A549 (cell line): ENCODE measurements at regions of chr2 and their contacts with region 1.

Region 1: DNA sequence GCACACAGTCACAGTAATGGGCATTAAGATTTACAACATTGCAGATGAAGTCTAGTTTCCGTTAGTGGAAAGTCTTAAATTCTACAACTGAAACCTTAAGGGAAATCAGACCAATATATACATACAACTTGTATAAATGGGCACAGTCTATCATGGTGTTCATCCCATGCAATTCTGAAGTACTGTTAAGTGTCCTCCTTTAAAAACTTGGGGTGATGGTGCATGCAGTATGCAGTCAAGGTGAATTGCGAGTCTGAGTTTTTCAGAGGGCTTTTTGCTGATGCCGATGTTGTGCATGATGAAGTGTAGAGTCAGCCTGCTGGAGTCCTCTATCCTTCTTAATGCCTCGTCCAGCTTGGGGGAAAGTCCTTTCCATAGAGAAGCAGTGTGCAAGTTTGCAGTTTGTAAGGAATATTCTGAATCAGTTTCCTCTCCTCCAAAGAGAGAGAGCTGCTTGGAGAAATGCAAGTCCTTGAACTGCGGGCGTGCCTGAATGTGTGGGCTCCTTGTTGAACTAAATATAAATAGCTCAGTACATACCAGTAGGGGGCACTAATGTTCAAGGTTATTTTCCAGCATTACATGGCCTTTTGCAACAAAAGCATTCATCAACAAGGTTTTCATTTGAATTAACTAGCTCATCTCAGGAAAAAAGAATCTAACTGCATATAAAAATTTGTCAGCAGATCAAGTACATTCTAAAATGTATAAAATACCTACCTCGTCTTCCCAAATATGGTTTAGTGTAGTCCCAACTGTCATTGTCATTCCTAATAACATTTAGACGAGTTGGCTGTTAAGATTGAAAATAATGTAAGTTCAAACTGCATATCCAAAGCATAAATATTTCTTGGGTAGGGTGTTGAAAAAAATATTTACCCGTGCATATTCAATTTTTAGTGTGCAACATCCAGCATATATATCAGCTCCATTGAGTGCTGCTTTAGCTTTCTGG is 21.3 kb downstream of the HNRNPLL start:
- DNase-seq: peak in 1 of 2 experiments; percentile 83
- ATAC-seq: peak; percentile 91 to 97
- H3K4me3 ChIP-seq: no peak overlapping the region
- H3K27ac ChIP-seq: no peak overlapping the region
- H3K4me1 ChIP-seq: peaks cover 3% of the 10 kb centered on the region; the same call in 1 of the 3 replicates
- CTCF ChIP-seq: peak; percentile 94
- EP300 ChIP-seq: no peak
- POLR2A ChIP-seq: no peak
- RAD21 ChIP-seq: peak; percentile 89 to 91

Region 2: GRCh38 chr2:38546585-38546984 is 34.9 kb before region 1 on chr2:
- CTCF ChIA-PET with region 1: interaction called, 11 read pairs
- POLR2A ChIA-PET with region 1: no interaction called
- DNase-seq: no peak
- ATAC-seq: no peak
- H3K4me3 ChIP-seq: no peak overlapping the region
- H3K27ac ChIP-seq: no peak overlapping the region
- H3K4me1 ChIP-seq: peaks cover 21% of the 10 kb centered on the region
- CTCF ChIP-seq: no peak
- EP300 ChIP-seq: no peak
- POLR2A ChIP-seq: no peak
- RAD21 ChIP-seq: no peak

Region 3: DNA sequence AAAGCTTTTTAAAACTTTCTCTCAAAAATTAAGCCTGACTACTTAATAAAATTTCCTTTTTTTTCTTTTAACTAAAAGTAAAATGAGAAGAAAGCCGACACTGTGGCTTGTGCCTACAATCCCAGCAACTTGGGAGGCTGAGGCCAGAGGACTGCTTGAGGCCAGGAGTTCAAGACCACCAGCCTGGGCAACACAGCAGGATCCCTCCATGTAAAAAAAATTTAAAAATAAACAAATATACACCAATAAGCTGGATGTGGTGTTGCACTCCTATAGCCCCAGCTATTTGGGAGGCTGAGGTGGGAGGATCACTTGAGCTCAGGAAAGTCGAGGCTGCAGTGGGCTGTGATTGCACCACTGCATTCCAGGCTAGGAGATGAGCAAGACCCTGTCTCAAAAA is 16.1 kb before region 1 on chr2:
- CTCF ChIA-PET with region 1: interaction called, 45 read pairs
- POLR2A ChIA-PET with region 1: no interaction called
- DNase-seq: no peak
- ATAC-seq: no peak
- H3K4me3 ChIP-seq: no peak overlapping the region
- H3K27ac ChIP-seq: no peak overlapping the region
- H3K4me1 ChIP-seq: 0 out of 3 replicates have a peak, but pooled peaks cover 3% of the 10 kb centered on the region
- CTCF ChIP-seq: no peak
- EP300 ChIP-seq: no peak
- POLR2A ChIP-seq: no peak
- RAD21 ChIP-seq: no peak

Region 4: GRCh38 chr2:38740851-38741731 is 159.6 kb after region 1 on chr2:
- CTCF ChIA-PET with region 1: interaction called, 423 read pairs
- POLR2A ChIA-PET with region 1: interaction called, 3 read pairs
- DNase-seq: peak; percentile 61 to 73
- ATAC-seq: peak; percentile 60 to 64; a peak in 5 of 6 replicates
- H3K4me3 ChIP-seq: no peak overlapping the region
- H3K27ac ChIP-seq: no peak overlapping the region
- H3K4me1 ChIP-seq: peaks cover 24% of the 10 kb centered on the region
- CTCF ChIP-seq: peak; percentile 80
- EP300 ChIP-seq: no peak
- POLR2A ChIP-seq: no peak
- RAD21 ChIP-seq: peak; percentile 48 to 74